Naive thymus-derived CD4-positive, alpha-beta T cell (primary cell): ENCODE measurements at regions of chr9 and their contacts with region 1.

Region 1: GRCh38 chr9:19946441-19947109 is 157.7 kb upstream of the SLC24A2 start:
- DNase-seq: peak in 3 of 9 donors; percentile 5 to 35 (median 22)
- ATAC-seq: peak; percentile 57
- H3K4me3 ChIP-seq: no peak overlapping the region
- H3K4me3 Mint-ChIP-seq: no peak overlapping the region
- H3K27ac ChIP-seq: no peak overlapping the region
- H3K27ac Mint-ChIP-seq: peak overlapping the region in 4 of 9 donors; percentile 10 to 64 (median 34)
- H3K4me1 ChIP-seq: no peaks in the 10 kb centered on the region
- H3K4me1 Mint-ChIP-seq: peaks cover 2 to 24% (median 11%) of the 10 kb centered on the region in 7 donors
- H3K27me3 ChIP-seq: no peaks in the 10 kb centered on the region
- H3K27me3 Mint-ChIP-seq: peaks cover 0 to 14% (median 7%) of the 10 kb centered on the region in 5 donors

Region 2: GRCh38 chr9:19976226-19976625 is 29.7 kb after region 1 on chr9:
- CTCF ChIA-PET with region 1: interaction called, 4 read pairs
- POLR2A ChIA-PET with region 1: no interaction called
- intact Hi-C with region 1: loop called in 1 of 2 experiments (anchors 1 kb)
- DNase-seq: peak in 8 of 9 donors; percentile 20 to 58 (median 39)
- ATAC-seq: peak; percentile 63
- H3K4me3 ChIP-seq: no peak overlapping the region
- H3K4me3 Mint-ChIP-seq: peak overlapping the region in 7 of 10 donors; percentile 1 to 69 (median 42)
- H3K27ac ChIP-seq: no peak overlapping the region
- H3K27ac Mint-ChIP-seq: peak overlapping the region; percentile 5 to 89 (median 79)
- H3K4me1 ChIP-seq: peaks cover 0 to 14% of the 10 kb centered on the region in 2 donors
- H3K4me1 Mint-ChIP-seq: peaks cover 7 to 30% (median 29%) of the 10 kb centered on the region in 7 donors
- H3K27me3 ChIP-seq: no peaks in the 10 kb centered on the region
- H3K27me3 Mint-ChIP-seq: no peaks in the 10 kb centered on the region

Region 3: DNA sequence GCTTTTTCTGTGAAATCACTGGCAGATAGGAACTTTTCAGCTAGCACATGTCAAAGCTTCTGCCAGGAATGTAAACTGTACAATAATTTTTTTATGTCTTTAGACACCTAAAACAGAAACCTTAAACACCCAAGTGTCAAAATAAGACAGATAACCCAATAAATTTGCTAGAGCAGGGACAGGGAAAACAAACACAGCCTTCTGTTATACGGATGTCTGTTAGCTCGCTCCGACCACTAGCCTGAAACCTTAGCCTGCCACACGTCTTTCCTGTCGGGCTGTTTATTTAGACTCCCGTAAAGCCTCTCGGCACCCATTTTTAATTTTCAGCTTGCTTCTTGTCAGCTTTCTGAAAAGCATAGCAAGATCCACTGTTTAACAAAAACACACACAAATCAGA is 197.6 kb after region 1 on chr9:
- CTCF ChIA-PET with region 1: no interaction called
- POLR2A ChIA-PET with region 1: no interaction called
- intact Hi-C with region 1: loop called in 1 of 2 experiments (anchors 10 kb)
- DNase-seq: peak in 3 of 9 donors; percentile 5 to 10 (median 7)
- ATAC-seq: no peak
- H3K4me3 ChIP-seq: no peak overlapping the region
- H3K4me3 Mint-ChIP-seq: peak overlapping the region in 9 of 10 donors; percentile 20 to 76 (median 61)
- H3K27ac ChIP-seq: no peak overlapping the region
- H3K27ac Mint-ChIP-seq: peak overlapping the region in 2 of 9 donors; percentile 55 to 87
- H3K4me1 ChIP-seq: no peaks in the 10 kb centered on the region
- H3K4me1 Mint-ChIP-seq: peaks cover 1 to 21% (median 12%) of the 10 kb centered on the region in 7 donors
- H3K27me3 ChIP-seq: no peaks in the 10 kb centered on the region
- H3K27me3 Mint-ChIP-seq: peaks cover 0 to 17% (median 9%) of the 10 kb centered on the region in 5 donors

Region 4: DNA sequence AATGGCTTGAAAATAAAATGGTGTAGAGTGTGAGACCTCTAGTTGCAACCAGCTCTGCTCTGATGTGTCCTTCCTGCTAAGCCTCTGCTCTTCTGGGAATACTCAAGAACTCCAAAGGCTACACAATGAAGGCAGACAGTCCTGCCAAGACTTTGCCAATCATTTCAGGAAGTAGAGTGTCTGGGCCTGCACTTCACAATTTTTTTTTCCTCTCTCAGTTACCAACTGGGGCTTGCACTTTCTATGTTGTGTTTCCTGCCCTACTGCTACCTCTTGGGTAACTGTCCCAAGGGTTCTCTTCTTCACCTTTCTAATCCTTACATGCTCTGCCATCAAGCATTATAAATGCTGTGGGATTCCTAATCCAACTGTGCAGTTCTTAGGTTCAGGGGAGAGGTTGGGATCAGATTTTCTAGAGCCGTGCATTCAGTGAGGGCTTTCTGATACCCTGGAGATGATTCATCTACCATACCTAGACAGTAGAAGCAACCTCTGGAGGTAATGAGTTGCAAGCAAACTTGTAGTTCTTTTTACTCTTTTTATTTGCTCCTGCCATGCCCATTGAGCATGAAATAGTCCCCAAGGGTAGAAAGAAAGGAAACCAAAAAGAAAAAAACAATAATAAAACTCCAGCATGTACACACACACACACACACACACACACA is 309.8 kb after region 1 on chr9:
- CTCF ChIA-PET with region 1: no interaction called
- POLR2A ChIA-PET with region 1: interaction called, 4 read pairs
- intact Hi-C with region 1: loop called in 1 of 2 experiments (anchors 10 kb)
- DNase-seq: peak in 4 of 9 donors; percentile 8 to 30 (median 14)
- ATAC-seq: peak; percentile 27
- H3K4me3 ChIP-seq: no peak overlapping the region
- H3K4me3 Mint-ChIP-seq: peak overlapping the region in 6 of 10 donors; percentile 6 to 58 (median 40)
- H3K27ac ChIP-seq: no peak overlapping the region
- H3K27ac Mint-ChIP-seq: peak overlapping the region; percentile 21 to 86 (median 72)
- H3K4me1 ChIP-seq: peaks cover 0 to 16% of the 10 kb centered on the region in 2 donors
- H3K4me1 Mint-ChIP-seq: peaks cover 6 to 39% (median 32%) of the 10 kb centered on the region in 7 donors
- H3K27me3 ChIP-seq: no peaks in the 10 kb centered on the region
- H3K27me3 Mint-ChIP-seq: no peaks in the 10 kb centered on the region